ENCODE measurements at regions of chr2 and their contacts with region 1.

Region 1: DNA sequence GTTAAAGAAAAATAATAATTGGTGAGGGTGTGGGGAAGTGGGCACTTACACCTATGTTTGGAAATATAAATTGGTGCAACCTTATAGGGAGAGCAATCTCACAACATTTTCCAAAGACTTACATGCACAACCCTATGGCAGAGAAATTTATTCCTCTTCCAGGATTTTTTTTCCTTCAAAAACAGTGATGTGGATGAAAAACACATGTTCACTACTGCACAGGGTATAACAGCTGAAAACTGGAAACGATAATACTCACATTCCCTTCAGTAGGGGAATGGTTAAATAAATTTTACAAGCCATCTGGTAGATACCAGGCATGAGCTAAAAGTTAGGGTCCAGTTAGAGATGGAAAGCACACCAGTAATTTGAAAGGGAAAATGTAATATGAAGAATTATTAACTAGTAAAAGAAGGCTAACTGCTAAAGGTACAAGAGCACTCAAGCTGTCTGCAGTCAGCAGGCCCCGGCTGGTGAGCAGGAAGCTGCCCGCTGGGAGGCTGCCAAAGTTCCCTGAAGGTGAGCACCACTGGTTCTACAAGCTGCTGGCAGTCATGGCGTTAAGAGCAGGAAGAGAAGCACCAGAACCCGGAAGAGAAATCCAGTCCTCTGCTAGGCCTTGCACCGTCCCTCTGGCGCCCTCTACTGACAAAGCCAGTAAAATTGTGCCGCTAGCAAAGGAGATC is 28.4 kb upstream of the CASP8 start:
- DNase-seq: peak; percentile 98
- H3K4me3 Mint-ChIP-seq: peak overlapping the region; percentile 71
- H3K27ac Mint-ChIP-seq: peak overlapping the region; percentile 84
- H3K4me1 Mint-ChIP-seq: peaks cover 51% of the 10 kb centered on the region
- H3K27me3 Mint-ChIP-seq: no peaks in the 10 kb centered on the region

Region 2: GRCh38 chr2:200864176-200864976 is 367.5 kb before region 1 on chr2 and contains the start of gene CLK1:
- CTCF ChIA-PET with region 1: interaction called, 5 read pairs
- intact Hi-C with region 1: loop called (anchors 1 kb)
- DNase-seq: peak; percentile 98
- H3K4me3 Mint-ChIP-seq: peak within 1 kb of the TSS; percentile 98
- H3K27ac Mint-ChIP-seq: peak within 1 kb of the TSS; percentile 100
- H3K4me1 Mint-ChIP-seq: peaks cover 32% of the 10 kb centered on the region
- H3K27me3 Mint-ChIP-seq: no peaks in the 10 kb centered on the region
- total RNA-seq, gene CLK1: 174 to 196 TPM

Region 3: GRCh38 chr2:201057087-201057521 is 174.8 kb before region 1 on chr2:
- CTCF ChIA-PET with region 1: no interaction called
- intact Hi-C with region 1: no loop called
- DNase-seq: no peak
- H3K4me3 Mint-ChIP-seq: no peak overlapping the region
- H3K27ac Mint-ChIP-seq: no peak overlapping the region
- H3K4me1 Mint-ChIP-seq: peaks cover 21% of the 10 kb centered on the region
- H3K27me3 Mint-ChIP-seq: no peaks in the 10 kb centered on the region

Region 4: GRCh38 chr2:201118121-201118960 is 113.6 kb before region 1 on chr2:
- CTCF ChIA-PET with region 1: interaction called, 24 read pairs
- intact Hi-C with region 1: loop called (anchors 1 kb)
- DNase-seq: peak; percentile 94
- H3K4me3 Mint-ChIP-seq: peak overlapping the region; percentile 96
- H3K27ac Mint-ChIP-seq: peak overlapping the region; percentile 100
- H3K4me1 Mint-ChIP-seq: peaks cover 41% of the 10 kb centered on the region
- H3K27me3 Mint-ChIP-seq: no peaks in the 10 kb centered on the region

Region 5: DNA sequence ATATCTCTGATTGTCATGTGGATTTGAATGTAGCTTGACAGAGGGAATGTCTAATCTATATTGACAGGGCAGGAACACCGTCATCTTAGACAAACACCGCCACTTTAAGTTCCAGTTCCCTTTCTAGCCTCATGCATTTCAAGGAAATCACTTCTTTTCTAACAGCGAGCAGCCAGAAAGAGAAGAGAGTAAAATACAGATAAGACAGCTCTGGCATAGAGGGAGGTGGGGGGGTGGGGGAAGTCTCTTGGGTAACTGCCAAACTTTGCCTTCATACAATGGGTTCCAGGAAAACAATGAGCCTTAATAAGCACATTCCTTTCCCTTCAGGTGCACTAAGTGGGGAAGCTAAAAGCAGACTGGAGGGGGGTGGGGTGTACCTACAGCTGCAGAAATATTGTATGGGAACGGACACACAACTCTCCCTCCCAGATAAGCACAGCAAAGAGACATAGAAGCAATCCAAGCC is 11.8 kb before region 1 on chr2:
- CTCF ChIA-PET with region 1: interaction called, 69 read pairs
- intact Hi-C with region 1: loop called (anchors 1 kb)
- DNase-seq: peak; percentile 43
- H3K4me3 Mint-ChIP-seq: no peak overlapping the region
- H3K27ac Mint-ChIP-seq: peak overlapping the region; percentile 74
- H3K4me1 Mint-ChIP-seq: peaks cover 58% of the 10 kb centered on the region
- H3K27me3 Mint-ChIP-seq: no peaks in the 10 kb centered on the region

Region 6: DNA sequence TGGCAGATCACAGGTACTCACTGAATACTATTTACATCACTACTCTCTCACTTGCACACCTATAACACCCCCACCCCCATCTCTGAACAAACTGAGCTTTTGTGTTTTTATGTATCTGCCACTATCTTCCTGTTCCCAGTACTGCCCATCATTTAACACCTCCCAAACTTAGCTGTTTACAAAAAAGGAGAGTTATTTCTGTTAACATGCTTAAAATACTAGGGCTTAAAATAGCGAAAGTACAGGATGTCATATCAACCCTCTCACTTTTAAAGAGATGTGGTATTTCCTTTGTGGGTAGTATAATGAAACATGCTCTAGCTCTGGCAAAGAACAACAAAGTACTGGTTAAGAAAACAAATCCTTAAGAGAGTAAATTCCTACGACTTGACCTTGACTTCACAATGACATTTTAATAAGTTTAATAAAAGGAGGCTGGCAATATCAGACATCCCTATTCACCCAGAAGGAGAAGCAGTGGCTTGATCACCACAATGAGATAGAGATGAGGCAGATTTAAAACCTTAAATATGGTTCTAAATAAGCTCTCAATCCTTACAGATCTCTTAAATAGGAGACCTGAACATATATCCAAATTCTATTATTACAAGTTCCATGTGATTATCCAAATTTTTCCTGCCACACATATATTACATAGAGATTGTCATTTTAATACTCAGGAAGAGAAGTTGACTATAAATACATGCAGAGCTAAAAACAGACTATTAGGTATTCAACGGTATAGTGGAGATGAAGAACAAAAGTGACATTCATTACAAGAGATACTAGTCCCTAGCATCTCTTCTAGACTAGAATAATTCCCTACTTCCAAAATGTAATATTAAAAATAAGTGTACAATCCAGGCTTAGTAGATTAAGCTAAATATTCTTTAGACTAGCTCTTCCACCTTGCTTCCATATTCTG is 182.4 kb after region 1 on chr2:
- CTCF ChIA-PET with region 1: interaction called, 4 read pairs
- intact Hi-C with region 1: loop called (anchors 5 kb)
- DNase-seq: peak; percentile 9
- H3K4me3 Mint-ChIP-seq: no peak overlapping the region
- H3K27ac Mint-ChIP-seq: no peak overlapping the region
- H3K4me1 Mint-ChIP-seq: peaks cover 23% of the 10 kb centered on the region
- H3K27me3 Mint-ChIP-seq: no peaks in the 10 kb centered on the region

Region 7: GRCh38 chr2:201488012-201488411 is 256.1 kb after region 1 on chr2:
- CTCF ChIA-PET with region 1: no interaction called
- intact Hi-C with region 1: no loop called
- DNase-seq: no peak
- H3K4me3 Mint-ChIP-seq: no peak overlapping the region
- H3K27ac Mint-ChIP-seq: no peak overlapping the region
- H3K4me1 Mint-ChIP-seq: no peaks in the 10 kb centered on the region
- H3K27me3 Mint-ChIP-seq: no peaks in the 10 kb centered on the region

Region 8: GRCh38 chr2:202178342-202178958 is 946.5 kb after region 1 on chr2:
- CTCF ChIA-PET with region 1: no interaction called
- intact Hi-C with region 1: loop called (anchors 1 kb)
- DNase-seq: peak; percentile 78
- H3K4me3 Mint-ChIP-seq: no peak overlapping the region
- H3K27ac Mint-ChIP-seq: no peak overlapping the region
- H3K4me1 Mint-ChIP-seq: no peaks in the 10 kb centered on the region
- H3K27me3 Mint-ChIP-seq: no peaks in the 10 kb centered on the region